Astrocyte of the cerebellum (primary cell): ENCODE measurements at regions of chr16 and their contacts with region 1.

Region 1: DNA sequence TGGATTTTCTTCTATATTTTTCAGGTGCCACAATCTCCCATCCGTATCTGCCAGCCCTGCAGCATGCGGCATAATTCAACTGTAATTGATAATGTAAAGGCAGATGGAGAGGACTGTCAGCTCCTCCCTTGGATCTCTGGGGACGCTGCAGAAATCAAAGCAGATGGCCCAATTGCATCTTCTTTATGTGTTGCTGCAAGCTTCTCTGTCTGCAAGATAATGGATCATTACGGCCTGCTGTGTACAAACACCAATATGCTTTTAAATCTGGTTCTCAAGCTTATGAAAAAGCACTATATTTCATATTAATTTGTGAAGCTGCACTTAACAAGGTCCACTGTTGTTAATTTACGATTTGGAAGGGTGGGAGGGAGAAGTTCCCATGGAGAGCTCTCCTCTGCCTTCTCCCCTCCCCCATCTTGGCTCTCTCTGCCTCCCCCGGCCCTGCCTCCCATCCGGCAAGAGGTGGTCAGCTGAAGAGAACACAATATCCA is 607.5 kb downstream of the TOX3 start:
- DNase-seq: no peak
- H3K4me3 ChIP-seq: no peak overlapping the region
- CTCF ChIP-seq: no peak

Region 2: DNA sequence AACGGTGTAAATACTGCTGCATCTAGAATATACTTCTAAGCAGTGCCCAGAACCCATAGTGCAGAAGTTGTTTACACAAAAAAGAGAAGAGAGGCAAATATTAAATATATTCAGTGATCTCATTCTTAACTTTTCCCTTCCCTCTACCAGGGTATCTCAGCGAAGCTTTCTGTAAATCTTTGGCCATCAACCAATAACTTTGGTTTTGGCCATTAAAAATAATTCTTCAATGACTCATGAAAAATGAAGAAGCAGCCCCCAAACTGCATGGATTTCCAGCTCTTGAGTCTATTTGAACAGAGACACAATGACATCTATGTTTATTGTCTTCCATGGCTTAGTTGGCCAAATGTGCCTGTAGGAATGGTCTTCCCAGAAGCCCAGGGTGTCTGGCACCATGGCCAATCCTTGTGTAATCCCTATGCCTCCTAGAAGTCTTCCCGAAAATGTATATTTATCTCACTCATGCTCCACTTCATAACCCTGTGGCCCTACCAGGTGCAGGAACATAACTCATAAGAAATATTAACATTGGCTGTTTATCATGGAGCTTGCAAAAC is 39.1 kb before region 1 on chr16:
- in situ Hi-C with region 1: loop called (anchors 5 kb)
- DNase-seq: no peak
- H3K4me3 ChIP-seq: no peak overlapping the region
- CTCF ChIP-seq: no peak